H1 (cell line): ENCODE measurements at regions of chr6 and their contacts with region 1.

Region 1: GRCh38 chr6:84685983-84686584 is 78.3 kb downstream of the TBX18 start:
- DNase-seq: peak; percentile 15 to 51
- H3K4me3 ChIP-seq: no peak overlapping the region
- H3K27ac ChIP-seq: no peak overlapping the region
- H3K4me1 ChIP-seq: no peaks in the 10 kb centered on the region
- H3K27me3 ChIP-seq: no peaks in the 10 kb centered on the region
- CTCF ChIP-seq: peak in 2 of 3 experiments; percentile 53 to 65; a peak in 3 of 4 replicates
- EP300 ChIP-seq: no peak
- POLR2A ChIP-seq: no peak
- RAD21 ChIP-seq: peak; percentile 75

Region 2: GRCh38 chr6:84346364-84346763 is 339.7 kb before region 1 on chr6:
- CTCF ChIA-PET with region 1: no interaction called
- POLR2A ChIA-PET with region 1: no interaction called
- DNase-seq: no peak
- H3K4me3 ChIP-seq: no peak overlapping the region
- H3K27ac ChIP-seq: no peak overlapping the region
- H3K4me1 ChIP-seq: no peaks in the 10 kb centered on the region
- H3K27me3 ChIP-seq: no peaks in the 10 kb centered on the region
- CTCF ChIP-seq: peak in 2 of 3 experiments; percentile 22 to 33; a peak in 2 of 4 replicates
- EP300 ChIP-seq: no peak
- POLR2A ChIP-seq: no peak
- RAD21 ChIP-seq: peak in 1 of 2 experiments; percentile 26; a peak in 1 of 4 replicates

Region 3: GRCh38 chr6:84601366-84601765 is 84.7 kb before region 1 on chr6:
- CTCF ChIA-PET with region 1: no interaction called
- POLR2A ChIA-PET with region 1: no interaction called
- DNase-seq: no peak
- H3K4me3 ChIP-seq: no peak overlapping the region
- H3K27ac ChIP-seq: no peak overlapping the region
- H3K4me1 ChIP-seq: no peaks in the 10 kb centered on the region
- H3K27me3 ChIP-seq: no peaks in the 10 kb centered on the region
- CTCF ChIP-seq: no peak
- EP300 ChIP-seq: no peak
- POLR2A ChIP-seq: no peak
- RAD21 ChIP-seq: no peak

Region 4: GRCh38 chr6:84674395-84674794 is 11.7 kb before region 1 on chr6:
- CTCF ChIA-PET with region 1: interaction called, 20 read pairs
- POLR2A ChIA-PET with region 1: no interaction called
- DNase-seq: no peak
- H3K4me3 ChIP-seq: no peak overlapping the region
- H3K27ac ChIP-seq: no peak overlapping the region
- H3K4me1 ChIP-seq: no peaks in the 10 kb centered on the region
- H3K27me3 ChIP-seq: no peaks in the 10 kb centered on the region
- CTCF ChIP-seq: no peak
- EP300 ChIP-seq: no peak
- POLR2A ChIP-seq: no peak
- RAD21 ChIP-seq: no peak

Region 5: DNA sequence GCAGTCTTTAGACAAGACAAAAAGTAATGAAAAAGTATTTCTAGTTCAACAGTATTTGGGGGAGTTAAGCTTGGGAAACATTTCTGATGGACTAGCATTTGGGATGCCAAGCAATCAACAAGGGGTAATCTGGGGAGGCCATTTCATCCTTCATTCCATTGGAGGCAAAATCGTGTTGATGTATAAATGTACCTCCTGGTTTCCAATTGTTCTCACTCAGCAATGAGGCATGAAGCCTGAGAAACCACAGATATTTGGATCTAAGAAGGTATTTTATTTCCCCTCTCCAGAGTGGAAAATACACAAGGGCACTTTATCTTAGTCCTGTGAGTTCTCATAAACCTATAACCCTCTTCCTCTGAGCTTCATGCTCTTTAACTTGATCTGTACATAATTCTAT is 10.1 kb after region 1 on chr6:
- CTCF ChIA-PET with region 1: interaction called, 10 read pairs
- POLR2A ChIA-PET with region 1: no interaction called
- DNase-seq: no peak
- H3K4me3 ChIP-seq: no peak overlapping the region
- H3K27ac ChIP-seq: no peak overlapping the region
- H3K4me1 ChIP-seq: no peaks in the 10 kb centered on the region
- H3K27me3 ChIP-seq: peaks cover 0 to 1% (median 0%) of the 10 kb centered on the region in 4 experiments; a peak in 1 of 7 replicates
- CTCF ChIP-seq: no peak
- EP300 ChIP-seq: no peak
- POLR2A ChIP-seq: no peak
- RAD21 ChIP-seq: no peak